Tibial artery (tissue), 4 donors: ENCODE measurements at regions of chr11 and their contacts with region 1.

Region 1: DNA sequence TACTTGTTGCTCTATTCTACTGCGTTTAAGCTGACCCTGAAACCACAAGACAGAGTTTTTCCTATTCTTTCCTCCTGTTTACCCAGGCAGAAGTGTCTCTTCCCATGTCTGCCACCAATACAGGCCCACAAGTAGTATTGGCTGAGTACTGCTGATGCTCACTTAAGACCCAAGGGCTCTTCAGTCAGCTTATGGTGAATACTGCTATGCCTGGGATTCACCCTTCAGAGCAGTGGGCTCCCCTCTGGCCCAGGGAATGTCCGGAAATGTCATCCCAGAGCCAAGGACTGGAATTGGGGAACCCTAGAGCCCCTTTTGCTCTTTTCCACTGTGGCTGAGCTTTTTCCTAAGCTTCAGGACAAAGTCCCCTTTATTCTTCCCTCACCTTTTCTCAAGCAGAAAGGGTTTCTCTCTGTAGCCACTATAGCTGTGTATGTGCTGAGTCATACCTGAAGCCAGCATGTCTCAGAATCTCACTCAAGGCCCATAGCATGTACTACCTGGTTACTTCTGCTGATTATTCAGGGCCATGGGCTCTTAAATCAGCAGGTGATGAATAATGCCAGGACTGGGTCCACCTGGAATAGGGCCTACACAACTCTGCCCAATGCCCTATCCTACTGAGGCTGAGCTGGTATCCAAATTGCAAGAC is 745.8 kb upstream of the ANO5 start:
- DNase-seq: no peak
- H3K4me3 ChIP-seq: no peak overlapping the region
- H3K27ac ChIP-seq: no peak overlapping the region
- H3K4me1 ChIP-seq: no peaks in the 10 kb centered on the region
- H3K27me3 ChIP-seq: no peaks in the 10 kb centered on the region
- CTCF ChIP-seq: no peak

Region 2: DNA sequence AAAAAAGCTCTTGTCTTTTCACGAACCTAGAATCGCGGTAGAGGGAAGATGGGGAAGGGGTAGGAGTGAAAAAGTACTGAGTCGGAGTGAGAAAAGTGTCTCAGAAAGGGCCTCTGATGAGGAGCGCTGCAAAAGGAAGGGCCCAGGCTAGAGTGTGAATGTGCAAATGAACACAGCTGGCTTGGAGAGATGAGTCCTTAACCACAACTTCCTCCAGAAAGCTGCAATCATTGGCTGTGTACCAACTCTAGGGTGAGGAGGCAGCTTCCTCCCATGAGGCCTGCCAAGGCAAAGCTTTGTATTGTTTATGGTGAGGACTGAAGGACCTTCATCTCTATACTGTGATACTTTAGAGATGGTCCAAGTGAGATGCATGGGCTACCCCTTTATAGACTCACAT is 178.9 kb after region 1 on chr11:
- intact Hi-C with region 1: loop called (anchors 5 kb)
- DNase-seq: peak; percentile 28 to 65
- H3K4me3 ChIP-seq: no peak overlapping the region
- H3K27ac ChIP-seq: no peak overlapping the region
- H3K4me1 ChIP-seq: no peaks in the 10 kb centered on the region
- H3K27me3 ChIP-seq: no peaks in the 10 kb centered on the region
- CTCF ChIP-seq: no peak